Activated CD4-positive, alpha-beta T cell treated with anti-CD3 and anti-CD28 coated beads for 36 hours (primary cell): ENCODE measurements at regions of chr17 and their contacts with region 1.

Region 1: GRCh38 chr17:48429638-48430586 is at the start of gene SKAP1:
- DNase-seq: peak; percentile 77
- ATAC-seq: peak; percentile 62
- H3K4me3 Mint-ChIP-seq: peak within 1 kb of the TSS; percentile 94
- H3K27ac Mint-ChIP-seq: peak within 1 kb of the TSS; percentile 98
- H3K4me1 Mint-ChIP-seq: peaks cover 57% of the 10 kb centered on the region
- H3K27me3 Mint-ChIP-seq: no peaks in the 10 kb centered on the region
- total RNA-seq, gene SKAP1: 76.1 to 109 TPM

Region 2: DNA sequence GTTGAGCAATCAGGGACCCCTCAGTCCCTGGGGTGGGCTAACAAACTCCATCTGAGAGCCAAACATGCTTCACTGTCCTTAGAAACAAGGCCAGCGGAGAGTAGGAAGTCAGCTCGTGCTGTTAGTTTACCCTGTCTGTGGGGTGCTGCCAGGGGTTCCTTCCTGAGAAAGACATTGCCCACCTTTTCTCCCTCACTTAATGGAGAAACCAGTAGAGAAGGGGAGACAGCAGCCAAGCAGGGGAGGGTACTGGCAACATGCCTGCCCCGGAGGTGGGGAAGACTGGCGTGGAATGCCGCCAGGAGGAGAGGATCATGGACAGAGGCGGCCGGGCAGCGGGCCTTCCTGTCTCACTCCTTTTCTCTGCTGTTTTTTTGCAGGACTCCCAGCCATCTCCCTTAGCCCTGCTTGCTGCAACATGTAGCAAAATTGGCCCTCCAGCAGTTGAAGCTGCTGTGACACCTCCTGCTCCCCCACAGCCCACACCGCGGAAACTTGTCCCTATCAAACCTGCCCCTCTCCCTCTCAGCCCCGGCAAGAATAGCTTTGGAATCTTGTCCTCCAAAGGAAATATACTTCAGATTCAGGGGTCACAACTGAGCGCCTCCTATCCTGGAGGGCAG is 514.0 kb before region 1 on chr17:
- CTCF ChIA-PET with region 1: no interaction called
- POLR2A ChIA-PET with region 1: no interaction called
- intact Hi-C with region 1: no loop called
- DNase-seq: no peak
- ATAC-seq: no peak
- H3K4me3 Mint-ChIP-seq: no peak overlapping the region
- H3K27ac Mint-ChIP-seq: no peak overlapping the region
- H3K4me1 Mint-ChIP-seq: peaks cover 10% of the 10 kb centered on the region
- H3K27me3 Mint-ChIP-seq: no peaks in the 10 kb centered on the region

Region 3: DNA sequence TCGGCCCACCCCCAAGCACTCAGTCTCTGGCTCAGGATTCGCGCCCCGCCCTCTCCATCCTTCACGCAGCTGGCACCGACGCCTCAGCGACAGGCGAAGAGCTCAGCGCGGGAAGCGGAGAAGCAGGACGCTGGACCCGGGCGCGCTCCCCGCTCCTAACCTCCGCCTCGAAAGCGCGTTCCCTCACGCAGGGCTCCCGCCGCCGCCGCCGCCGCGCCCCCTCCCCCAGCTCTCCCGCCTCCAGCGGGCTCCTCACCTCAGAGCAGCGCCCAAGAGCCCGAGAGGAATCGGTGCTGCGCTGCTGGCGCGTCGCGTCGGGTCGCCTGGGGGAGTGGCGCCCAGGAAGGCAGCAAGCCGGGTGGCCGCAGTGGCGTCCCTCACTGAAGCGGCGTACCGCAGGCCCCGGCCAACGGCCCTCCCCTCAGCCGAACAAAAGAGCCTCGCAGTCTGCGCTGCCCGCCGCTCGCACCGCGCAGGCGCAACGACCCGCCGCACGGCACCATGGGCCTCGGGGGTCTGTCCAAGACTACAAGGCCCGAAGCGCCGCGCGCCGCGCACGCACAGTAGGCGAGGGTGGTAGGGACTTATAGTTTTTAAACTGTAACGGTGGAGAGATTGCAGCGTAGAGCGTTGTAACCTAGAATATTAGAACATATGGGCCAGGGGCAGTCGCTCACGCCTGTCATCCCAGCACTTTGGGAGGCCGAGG is 328.7 kb before region 1 on chr17 and contains the start of gene CBX1:
- CTCF ChIA-PET with region 1: no interaction called
- POLR2A ChIA-PET with region 1: no interaction called
- intact Hi-C with region 1: loop called in 1 of 2 experiments (anchors 5 kb)
- DNase-seq: peak; percentile 97
- ATAC-seq: peak; percentile 95
- H3K4me3 Mint-ChIP-seq: peak within 1 kb of the TSS; percentile 99
- H3K27ac Mint-ChIP-seq: peak within 1 kb of the TSS; percentile 83
- H3K4me1 Mint-ChIP-seq: peaks cover 41% of the 10 kb centered on the region
- H3K27me3 Mint-ChIP-seq: no peaks in the 10 kb centered on the region
- total RNA-seq, gene CBX1: 58.6 to 66.0 TPM

Region 4: GRCh38 chr17:48441231-48441711 is 11.4 kb after region 1 on chr17:
- CTCF ChIA-PET with region 1: interaction called, 6 read pairs
- POLR2A ChIA-PET with region 1: interaction called, 6 read pairs
- intact Hi-C with region 1: loop called (anchors 1 kb)
- DNase-seq: peak; percentile 35
- ATAC-seq: peak; percentile 55
- H3K4me3 Mint-ChIP-seq: peak overlapping the region; percentile 31
- H3K27ac Mint-ChIP-seq: peak overlapping the region; percentile 91
- H3K4me1 Mint-ChIP-seq: peaks cover 95% of the 10 kb centered on the region
- H3K27me3 Mint-ChIP-seq: no peaks in the 10 kb centered on the region